Naive thymus-derived CD4-positive, alpha-beta T cell (primary cell): ENCODE measurements at regions of chr14 and their contacts with region 1.

Region 1: GRCh38 chr14:102591889-102592763 is at the start of gene RCOR1:
- DNase-seq: peak; percentile 95 to 98 (median 98)
- ATAC-seq: peak; percentile 93
- H3K4me3 ChIP-seq: peak within 1 kb of the TSS; percentile 80
- H3K4me3 Mint-ChIP-seq: peak within 1 kb of the TSS; percentile 86 to 96 (median 93)
- H3K27ac ChIP-seq: peak within 1 kb of the TSS; percentile 99
- H3K27ac Mint-ChIP-seq: peak within 1 kb of the TSS; percentile 90 to 98 (median 96)
- H3K4me1 ChIP-seq: peaks cover 10 to 12% of the 10 kb centered on the region in 2 donors
- H3K4me1 Mint-ChIP-seq: peaks cover 15 to 34% (median 24%) of the 10 kb centered on the region in 7 donors
- H3K27me3 ChIP-seq: no peaks in the 10 kb centered on the region
- H3K27me3 Mint-ChIP-seq: peaks cover 0 to 16% (median 0%) of the 10 kb centered on the region in 5 donors
- total RNA-seq, gene RCOR1: 19.0 to 34.4 (median 23.7) TPM

Region 2: DNA sequence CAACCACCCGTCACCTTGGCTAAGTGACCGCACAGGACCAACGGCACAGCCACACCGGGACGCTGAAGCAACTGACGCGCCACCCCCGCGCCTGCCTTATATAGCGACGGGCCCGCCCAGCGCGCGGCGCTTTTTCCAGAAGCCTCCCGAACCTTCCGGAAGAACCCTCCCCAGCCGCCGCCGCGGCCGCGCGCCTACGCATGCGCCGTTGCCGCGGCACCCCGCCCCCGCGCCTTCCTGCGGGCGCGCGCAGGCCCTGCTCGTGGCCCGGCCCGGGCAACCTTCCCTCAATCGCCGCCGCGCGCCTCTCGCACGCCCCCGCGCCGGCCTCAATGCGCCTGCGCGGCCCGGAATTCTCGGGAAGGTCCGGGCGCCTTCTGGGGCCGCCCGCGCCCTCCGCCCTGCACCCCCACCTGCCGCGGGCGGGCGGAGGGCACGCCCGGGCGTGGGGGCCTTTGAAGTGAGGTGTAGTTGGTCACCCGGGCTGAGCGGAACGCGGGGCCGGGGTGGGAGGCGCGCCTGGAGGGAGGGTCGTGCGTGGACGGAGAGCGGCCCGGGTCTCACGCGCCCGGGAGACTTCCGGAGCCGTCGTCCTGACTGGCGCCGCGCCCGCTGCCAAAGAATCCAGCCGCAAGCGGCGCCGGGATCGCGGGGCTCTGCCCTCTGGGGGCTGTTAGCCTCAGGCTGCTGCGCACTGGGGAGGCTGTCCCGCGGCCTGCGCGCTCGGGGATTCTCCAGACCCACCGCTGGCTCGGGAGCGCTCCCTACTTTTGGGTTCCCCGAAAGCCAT is 505.0 kb before region 1 on chr14 and contains the start of gene HSP90AA1:
- CTCF ChIA-PET with region 1: no interaction called
- POLR2A ChIA-PET with region 1: no interaction called
- intact Hi-C with region 1: loop called in 1 of 2 experiments (anchors 2 kb)
- DNase-seq: peak; percentile 89 to 99 (median 94)
- ATAC-seq: peak; percentile 87
- H3K4me3 ChIP-seq: peak within 1 kb of the TSS; percentile 91
- H3K4me3 Mint-ChIP-seq: peak within 1 kb of the TSS; percentile 90 to 98 (median 96)
- H3K27ac ChIP-seq: peak within 1 kb of the TSS; percentile 98
- H3K27ac Mint-ChIP-seq: peak within 1 kb of the TSS; percentile 93 to 98 (median 96)
- H3K4me1 ChIP-seq: peaks cover 41 to 43% of the 10 kb centered on the region in 2 donors
- H3K4me1 Mint-ChIP-seq: peaks cover 44 to 70% (median 62%) of the 10 kb centered on the region in 7 donors
- H3K27me3 ChIP-seq: no peaks in the 10 kb centered on the region
- H3K27me3 Mint-ChIP-seq: no peaks in the 10 kb centered on the region
- total RNA-seq, gene HSP90AA1: 229 to 591 (median 361) TPM

Region 3: DNA sequence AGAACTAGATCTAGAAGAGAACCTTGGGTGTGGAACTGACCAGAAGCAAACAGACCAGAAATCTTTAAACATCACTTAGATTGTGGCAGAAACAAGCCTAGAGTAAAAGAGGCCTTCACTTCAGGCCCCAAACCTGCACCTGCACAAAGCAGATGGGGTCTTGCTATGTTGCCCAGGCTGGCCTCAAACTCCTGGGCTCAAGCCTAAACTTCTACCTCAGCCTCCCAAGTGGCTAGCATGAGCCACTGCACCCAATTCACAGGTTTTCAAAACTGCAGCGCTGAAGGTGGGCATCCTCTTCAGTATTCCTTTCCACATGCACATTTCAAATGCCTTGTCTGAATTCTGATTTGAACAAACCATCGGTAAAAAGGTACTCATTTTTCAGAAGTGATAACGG is 307.0 kb before region 1 on chr14:
- CTCF ChIA-PET with region 1: no interaction called
- POLR2A ChIA-PET with region 1: no interaction called
- intact Hi-C with region 1: no loop called
- DNase-seq: no peak
- ATAC-seq: no peak
- H3K4me3 ChIP-seq: no peak overlapping the region
- H3K4me3 Mint-ChIP-seq: no peak overlapping the region
- H3K27ac ChIP-seq: no peak overlapping the region
- H3K27ac Mint-ChIP-seq: no peak overlapping the region
- H3K4me1 ChIP-seq: no peaks in the 10 kb centered on the region
- H3K4me1 Mint-ChIP-seq: no peaks in the 10 kb centered on the region
- H3K27me3 ChIP-seq: no peaks in the 10 kb centered on the region
- H3K27me3 Mint-ChIP-seq: no peaks in the 10 kb centered on the region

Region 4: DNA sequence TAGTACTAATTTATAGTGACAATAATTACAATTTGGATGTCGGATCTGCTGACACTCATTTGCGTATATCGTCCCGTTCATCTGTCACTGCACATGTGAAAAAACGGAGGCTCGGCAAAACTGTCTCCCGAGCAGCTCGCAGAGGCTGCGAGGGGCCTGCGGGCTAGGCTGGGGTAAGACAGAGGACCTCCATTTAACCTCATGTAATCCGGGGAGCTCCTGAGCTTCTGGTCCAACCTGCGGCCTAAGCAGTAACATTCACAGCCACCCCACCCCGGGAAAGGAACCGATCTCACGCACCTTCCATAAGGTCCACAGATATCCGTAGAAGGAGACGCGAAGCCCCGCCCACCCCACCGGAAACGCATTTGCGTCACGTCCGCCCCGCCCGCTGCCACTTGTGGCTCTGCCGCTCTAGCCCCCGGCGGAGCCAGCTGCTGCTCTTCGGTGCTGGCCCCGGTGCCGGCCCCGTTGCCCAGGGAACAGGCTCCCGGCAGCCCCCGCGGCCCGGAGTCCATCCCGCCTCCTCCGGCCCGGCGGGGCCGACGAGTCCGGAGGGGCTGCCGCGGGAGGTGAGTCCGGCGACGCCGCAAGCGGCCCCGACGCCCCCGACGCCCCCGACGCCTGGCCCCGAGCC is 229.5 kb before region 1 on chr14 and contains the starts of genes CINP and TECPR2:
- CTCF ChIA-PET with region 1: no interaction called
- POLR2A ChIA-PET with region 1: no interaction called
- intact Hi-C with region 1: loop called in 1 of 2 experiments (anchors 1 kb)
- DNase-seq: peak; percentile 88 to 95 (median 92)
- ATAC-seq: peak; percentile 97
- H3K4me3 ChIP-seq: peak within 1 kb of the TSS; percentile 96
- H3K4me3 Mint-ChIP-seq: peak within 1 kb of the TSS in 6 of 10 donors; percentile 92 to 97 (median 95)
- H3K27ac ChIP-seq: peak within 1 kb of the TSS; percentile 87
- H3K27ac Mint-ChIP-seq: peak within 1 kb of the TSS; percentile 82 to 99 (median 96)
- H3K4me1 ChIP-seq: peaks cover 6 to 15% of the 10 kb centered on the region in 2 donors
- H3K4me1 Mint-ChIP-seq: peaks cover 17 to 42% (median 36%) of the 10 kb centered on the region in 7 donors
- H3K27me3 ChIP-seq: no peaks in the 10 kb centered on the region
- H3K27me3 Mint-ChIP-seq: no peaks in the 10 kb centered on the region
- total RNA-seq, gene CINP: 16.8 to 34.4 (median 31.8) TPM
- total RNA-seq, gene TECPR2: 8.7 to 12.9 (median 11.4) TPM

Region 5: DNA sequence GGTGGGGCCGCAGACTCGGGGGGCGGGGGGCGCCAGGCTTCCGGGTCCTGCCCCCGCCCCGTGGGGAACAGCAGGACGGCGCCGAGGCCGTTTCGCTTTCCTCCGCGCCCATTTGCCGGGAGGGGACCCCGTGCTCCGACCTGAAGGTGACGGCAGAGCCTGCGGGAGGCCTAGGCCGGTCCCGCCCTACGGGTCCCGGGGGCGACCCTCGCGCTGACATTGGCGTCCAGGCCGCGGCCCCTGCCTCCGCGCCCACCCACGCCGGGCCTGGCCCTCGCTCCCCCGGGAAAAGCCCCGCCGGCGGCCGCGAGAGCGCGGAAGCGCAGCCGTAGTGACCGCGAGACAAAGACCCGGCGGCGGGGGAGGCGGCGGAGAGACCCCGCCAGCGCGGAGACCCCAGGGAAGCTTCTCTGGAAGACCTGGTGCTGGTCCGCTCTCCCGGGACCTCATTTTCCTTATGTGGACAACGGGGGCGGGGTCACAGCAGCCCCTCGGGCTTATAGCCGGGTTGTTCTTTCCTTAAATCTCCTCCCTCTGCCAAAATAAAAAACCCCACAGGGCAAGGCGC is 36.8 kb before region 1 on chr14:
- CTCF ChIA-PET with region 1: no interaction called
- POLR2A ChIA-PET with region 1: no interaction called
- intact Hi-C with region 1: loop called (anchors 1 kb)
- DNase-seq: peak; percentile 46 to 67 (median 60)
- ATAC-seq: peak; percentile 91
- H3K4me3 ChIP-seq: peak overlapping the region; percentile 74
- H3K4me3 Mint-ChIP-seq: peak overlapping the region; percentile 66 to 87 (median 78)
- H3K27ac ChIP-seq: peak overlapping the region; percentile 93
- H3K27ac Mint-ChIP-seq: peak overlapping the region; percentile 54 to 89 (median 78)
- H3K4me1 ChIP-seq: peaks cover 0 to 7% of the 10 kb centered on the region in 2 donors
- H3K4me1 Mint-ChIP-seq: peaks cover 0 to 4% (median 0%) of the 10 kb centered on the region in 7 donors
- H3K27me3 ChIP-seq: no peaks in the 10 kb centered on the region
- H3K27me3 Mint-ChIP-seq: peaks cover 0 to 3% (median under 1%) of the 10 kb centered on the region in 5 donors

Region 6: GRCh38 chr14:102577361-102577760 is 14.8 kb before region 1 on chr14:
- CTCF ChIA-PET with region 1: no interaction called
- POLR2A ChIA-PET with region 1: no interaction called
- intact Hi-C with region 1: no loop called
- DNase-seq: no peak
- ATAC-seq: no peak
- H3K4me3 ChIP-seq: no peak overlapping the region
- H3K4me3 Mint-ChIP-seq: no peak overlapping the region
- H3K27ac ChIP-seq: no peak overlapping the region
- H3K27ac Mint-ChIP-seq: no peak overlapping the region
- H3K4me1 ChIP-seq: no peaks in the 10 kb centered on the region
- H3K4me1 Mint-ChIP-seq: peaks cover 0 to 11% (median 5%) of the 10 kb centered on the region in 7 donors
- H3K27me3 ChIP-seq: no peaks in the 10 kb centered on the region
- H3K27me3 Mint-ChIP-seq: peaks cover 0 to 6% (median 4%) of the 10 kb centered on the region in 5 donors

Region 7: DNA sequence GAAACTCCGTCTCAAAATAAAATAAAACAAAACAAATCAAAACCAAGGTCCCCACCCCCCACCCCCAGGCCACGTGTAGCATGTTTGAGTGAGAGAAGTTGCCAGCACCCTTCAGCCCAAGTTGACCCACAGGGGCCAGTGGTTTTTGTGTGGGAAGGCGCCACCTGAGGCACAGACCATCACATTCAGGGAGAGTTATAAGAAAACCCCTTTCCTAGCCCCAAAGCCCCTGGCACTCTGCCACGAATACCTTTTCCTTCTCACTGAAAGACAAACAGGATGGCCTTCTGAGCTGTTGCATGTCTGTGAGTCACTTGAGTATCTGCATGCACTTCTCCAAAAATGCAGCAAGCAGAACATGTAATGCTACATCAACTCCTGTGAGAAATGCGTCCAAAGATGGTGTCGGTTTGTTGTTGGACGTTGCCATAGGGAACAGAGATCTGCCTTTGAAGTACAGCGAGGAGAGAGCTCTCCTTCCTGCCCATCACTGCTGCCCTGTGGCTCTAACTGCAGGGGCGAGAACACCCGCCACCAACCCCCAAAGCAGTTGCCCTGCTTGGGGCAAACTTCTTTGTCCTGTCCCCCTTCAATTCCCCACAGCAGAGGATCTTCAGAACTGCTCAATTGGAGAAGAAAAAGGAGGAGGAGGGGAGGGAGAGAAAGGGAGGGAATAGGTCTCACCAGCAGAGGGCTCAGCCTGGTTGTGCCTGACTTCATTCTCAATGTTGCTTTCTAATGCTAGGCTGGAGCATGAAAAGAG is 182.4 kb after region 1 on chr14:
- CTCF ChIA-PET with region 1: no interaction called
- POLR2A ChIA-PET with region 1: no interaction called
- intact Hi-C with region 1: loop called (anchors 2 kb)
- DNase-seq: peak; percentile 39 to 85 (median 76)
- ATAC-seq: peak; percentile 52
- H3K4me3 ChIP-seq: no peak overlapping the region
- H3K4me3 Mint-ChIP-seq: peak overlapping the region; percentile 48 to 79 (median 63)
- H3K27ac ChIP-seq: peak overlapping the region; percentile 79
- H3K27ac Mint-ChIP-seq: peak overlapping the region; percentile 83 to 97 (median 92)
- H3K4me1 ChIP-seq: peaks cover 13 to 30% of the 10 kb centered on the region in 2 donors
- H3K4me1 Mint-ChIP-seq: peaks cover 14 to 44% (median 35%) of the 10 kb centered on the region in 7 donors
- H3K27me3 ChIP-seq: no peaks in the 10 kb centered on the region
- H3K27me3 Mint-ChIP-seq: no peaks in the 10 kb centered on the region

Region 8: GRCh38 chr14:103333754-103334643 is 741.9 kb after region 1 on chr14 and contains the start of gene EIF5:
- CTCF ChIA-PET with region 1: no interaction called
- POLR2A ChIA-PET with region 1: interaction called, 3 read pairs
- intact Hi-C with region 1: loop called in 1 of 2 experiments (anchors 5 kb)
- DNase-seq: peak; percentile 92 to 99 (median 99)
- ATAC-seq: peak; percentile 91
- H3K4me3 ChIP-seq: peak within 1 kb of the TSS; percentile 81
- H3K4me3 Mint-ChIP-seq: peak within 1 kb of the TSS; percentile 92 to 97 (median 96)
- H3K27ac ChIP-seq: peak within 1 kb of the TSS; percentile 99
- H3K27ac Mint-ChIP-seq: peak within 1 kb of the TSS; percentile 94 to 99 (median 98)
- H3K4me1 ChIP-seq: peaks cover 22 to 29% of the 10 kb centered on the region in 2 donors
- H3K4me1 Mint-ChIP-seq: peaks cover 23 to 61% (median 50%) of the 10 kb centered on the region in 7 donors
- H3K27me3 ChIP-seq: no peaks in the 10 kb centered on the region
- H3K27me3 Mint-ChIP-seq: peaks cover 0 to 4% (median 0%) of the 10 kb centered on the region in 5 donors
- total RNA-seq, gene EIF5: 182 to 716 (median 322) TPM